K562 (cell line): ENCODE measurements at regions of chr5 and their contacts with region 1.

Region 1: DNA sequence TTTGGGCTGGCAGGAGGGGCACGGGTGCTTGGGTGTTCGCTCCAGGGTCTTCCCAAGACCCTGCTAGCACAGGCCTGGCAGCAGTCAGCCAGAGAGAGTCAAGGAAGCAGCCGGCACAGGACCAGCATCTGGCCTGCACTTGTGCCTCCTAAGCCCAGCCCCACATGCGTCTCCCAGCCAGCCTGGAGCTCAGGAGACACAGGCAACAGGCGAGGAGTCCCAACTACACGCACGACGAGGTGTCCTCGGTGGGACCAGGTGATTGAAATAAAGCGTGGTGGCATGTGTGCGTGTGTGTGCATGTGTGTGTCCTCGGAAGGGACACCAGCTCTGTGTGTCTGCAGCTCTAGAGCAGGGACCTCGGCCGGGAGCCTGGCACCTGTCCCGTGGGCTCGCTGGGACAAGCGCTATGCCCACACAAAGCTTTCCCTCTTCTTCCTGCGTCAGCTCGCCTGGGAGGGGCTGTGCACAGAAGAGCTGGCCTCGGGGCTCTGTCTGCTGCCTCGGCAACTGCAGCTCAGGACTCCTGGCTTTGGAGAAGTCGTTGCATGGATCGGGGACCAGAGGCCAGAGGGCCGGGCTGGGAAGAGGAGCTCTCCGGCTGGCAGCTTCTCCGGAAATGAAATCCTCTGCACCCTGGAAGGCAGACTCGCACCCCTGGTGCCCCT is 14.7 kb upstream of the SLC9A3 start:
- DNase-seq: no peak
- ATAC-seq: no peak
- H3K4me3 ChIP-seq: no peak overlapping the region
- H3K27ac ChIP-seq: no peak overlapping the region
- H3K4me1 ChIP-seq: peaks cover 0 to 70% of the 10 kb centered on the region in 2 experiments; a peak in 2 of 5 replicates
- H3K27me3 ChIP-seq: peaks cover 50 to 80% of the 10 kb centered on the region in 2 experiments
- CTCF ChIP-seq: no peak
- EP300 ChIP-seq: no peak
- POLR2A ChIP-seq: no peak
- RAD21 ChIP-seq: no peak

Region 2: GRCh38 chr5:528625-529511 is 10.1 kb before region 1 on chr5:
- CTCF ChIA-PET with region 1: no interaction called
- POLR2A ChIA-PET with region 1: interaction called, 14 read pairs
- in situ Hi-C with region 1: no loop called
- intact Hi-C with region 1: no loop called
- DNase-seq: no peak
- ATAC-seq: no peak
- H3K4me3 ChIP-seq: no peak overlapping the region
- H3K27ac ChIP-seq: no peak overlapping the region
- H3K4me1 ChIP-seq: peaks cover 0 to 17% of the 10 kb centered on the region in 2 experiments; a peak in 2 of 5 replicates
- H3K27me3 ChIP-seq: peaks cover 40 to 77% of the 10 kb centered on the region in 2 experiments; a peak in 4 of 5 replicates
- CTCF ChIP-seq: no peak; a peak in 1 of 6 replicates
- EP300 ChIP-seq: no peak
- POLR2A ChIP-seq: no peak
- RAD21 ChIP-seq: no peak